ENCODE measurements at regions of chr1 and their contacts with region 1.

Region 1: DNA sequence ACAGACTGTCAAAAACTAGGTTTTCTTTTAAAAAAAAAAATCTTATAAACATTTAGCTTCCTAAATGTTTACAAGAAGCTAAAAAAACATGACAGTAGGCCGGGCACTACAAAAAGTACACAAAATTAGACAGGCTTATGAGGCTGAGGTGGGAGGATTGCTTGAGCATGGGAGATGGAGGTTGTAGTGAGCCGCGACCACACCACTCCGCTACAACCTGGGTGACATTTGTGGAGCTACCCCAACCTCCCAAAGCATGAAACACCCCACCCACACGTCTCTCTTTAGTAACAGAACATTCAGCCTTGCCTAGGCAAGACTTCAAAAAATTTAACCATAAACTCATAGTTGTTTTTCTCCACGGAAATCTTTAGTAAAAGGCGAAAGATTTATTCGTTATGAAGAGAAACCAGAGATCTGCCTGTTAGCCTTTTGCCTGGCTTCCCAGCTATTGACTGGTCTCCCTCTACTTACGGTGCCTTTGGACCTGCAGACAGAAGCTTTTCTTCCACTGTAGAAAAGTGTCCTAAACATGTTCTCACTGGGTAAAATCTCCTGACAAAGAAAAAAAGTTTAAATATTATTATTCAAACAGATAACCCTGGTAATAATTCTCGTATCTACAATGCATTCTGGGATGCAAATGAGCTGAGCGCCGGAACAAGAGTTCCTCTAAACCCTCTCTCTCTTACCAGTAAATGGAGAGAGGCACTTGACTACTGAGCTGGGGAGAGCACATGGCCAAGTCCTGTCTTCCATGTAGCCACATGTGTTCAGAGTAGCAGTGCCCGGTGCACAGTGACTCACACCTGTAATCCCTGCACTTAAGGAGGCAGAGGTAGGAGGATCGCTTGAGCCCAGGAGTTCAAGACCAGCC is 9.2 kb downstream of the RNU5D-1 start:
- DNase-seq: peak; percentile 91 to 98 (median 94)
- ATAC-seq: peak; percentile 97
- H3K4me3 ChIP-seq: no peak overlapping the region
- H3K27ac ChIP-seq: peak overlapping the region; percentile 95
- H3K4me1 ChIP-seq: peaks cover 17 to 24% of the 10 kb centered on the region in 2 experiments
- H3K27me3 ChIP-seq: peaks cover 2 to 12% of the 10 kb centered on the region in 2 experiments; a peak in 4 of 5 replicates
- CTCF ChIP-seq: no peak; a peak in 2 of 6 replicates
- EP300 ChIP-seq: peak; percentile 86
- POLR2A ChIP-seq: peak; percentile 100
- RAD21 ChIP-seq: peak in 1 of 2 experiments; percentile 56; a peak in 2 of 4 replicates

Region 2: GRCh38 chr1:44553771-44554170 is 168.0 kb before region 1 on chr1:
- CTCF ChIA-PET with region 1: no interaction called
- POLR2A ChIA-PET with region 1: no interaction called
- in situ Hi-C with region 1: no loop called
- intact Hi-C with region 1: no loop called
- DNase-seq: no peak
- ATAC-seq: no peak
- H3K4me3 ChIP-seq: no peak overlapping the region
- H3K27ac ChIP-seq: no peak overlapping the region
- H3K4me1 ChIP-seq: no peaks in the 10 kb centered on the region
- H3K27me3 ChIP-seq: peaks cover 63 to 65% of the 10 kb centered on the region in 2 experiments
- CTCF ChIP-seq: no peak
- EP300 ChIP-seq: no peak
- POLR2A ChIP-seq: no peak
- RAD21 ChIP-seq: no peak

Region 3: DNA sequence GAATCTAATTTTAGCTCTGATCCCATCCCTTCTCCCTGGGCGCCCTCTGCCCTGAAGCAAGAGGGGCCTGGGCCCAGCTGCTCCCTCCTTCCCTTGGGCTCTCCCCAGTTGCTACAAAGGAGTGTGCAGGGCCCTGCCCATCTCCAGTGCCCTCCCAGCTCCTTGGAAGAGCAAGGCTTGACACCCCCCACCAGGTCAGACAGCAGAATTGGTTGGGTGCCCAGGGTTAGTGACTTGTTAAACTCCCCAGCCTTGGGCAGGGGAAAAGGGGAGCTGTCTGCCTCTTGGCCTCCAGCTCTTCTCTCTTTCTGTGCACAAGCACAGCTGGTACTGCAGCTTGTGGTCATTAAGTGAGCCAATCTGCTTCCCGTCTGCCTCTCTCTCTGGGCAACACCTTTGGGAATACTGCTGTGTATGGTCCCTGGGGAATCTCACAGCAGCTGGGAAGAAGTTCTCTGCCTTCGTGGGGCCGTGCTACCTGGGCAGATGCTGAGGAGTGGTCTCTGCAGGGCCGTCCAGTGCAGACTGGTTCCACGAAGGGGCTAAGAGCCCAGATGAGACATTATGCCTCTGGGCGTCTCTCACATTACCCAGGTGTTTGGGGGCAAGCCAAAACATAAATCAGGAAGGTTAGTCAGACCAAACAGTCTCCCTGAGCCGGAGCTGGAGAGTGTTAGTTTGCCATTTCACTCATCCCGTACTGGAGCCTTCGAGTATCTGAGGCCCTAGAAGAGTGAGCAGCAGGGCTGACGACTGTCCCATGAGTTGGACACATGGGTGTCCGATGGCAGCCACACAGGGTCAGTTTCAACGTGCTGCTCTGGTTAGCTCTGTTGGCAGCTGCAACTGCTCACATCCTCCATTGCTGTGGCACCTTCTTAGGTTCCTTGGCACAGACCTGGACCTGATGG is 84.8 kb before region 1 on chr1:
- CTCF ChIA-PET with region 1: no interaction called
- POLR2A ChIA-PET with region 1: interaction called, 21 read pairs
- in situ Hi-C with region 1: no loop called
- intact Hi-C with region 1: no loop called
- DNase-seq: no peak
- ATAC-seq: peak; percentile 3
- H3K4me3 ChIP-seq: no peak overlapping the region
- H3K27ac ChIP-seq: peak overlapping the region; percentile 49; the same call in 2 of the 3 replicates
- H3K4me1 ChIP-seq: peaks cover 46 to 49% of the 10 kb centered on the region in 2 experiments; a peak in 4 of 5 replicates
- H3K27me3 ChIP-seq: no peaks in the 10 kb centered on the region
- CTCF ChIP-seq: no peak
- EP300 ChIP-seq: no peak
- POLR2A ChIP-seq: no peak
- RAD21 ChIP-seq: no peak

Region 4: DNA sequence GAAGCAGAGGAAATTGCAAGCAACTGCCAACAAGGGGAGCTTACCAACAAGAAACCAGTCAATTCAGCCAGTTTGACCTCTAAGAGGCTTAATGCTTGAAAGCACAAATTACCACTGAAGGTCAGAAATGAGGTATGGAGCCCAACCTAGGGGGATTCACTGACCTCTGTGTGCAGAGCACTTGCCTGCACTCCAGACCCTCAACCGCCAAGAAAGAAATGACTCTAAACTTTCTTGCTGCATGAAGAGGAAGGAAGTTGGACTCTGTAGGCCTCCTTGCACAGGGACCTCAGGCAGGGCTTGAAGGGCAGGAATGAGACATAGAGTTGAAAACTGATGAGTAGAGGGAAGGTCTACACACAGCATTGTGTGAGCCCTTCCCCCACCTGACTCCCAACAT is 37.2 kb before region 1 on chr1:
- CTCF ChIA-PET with region 1: no interaction called
- POLR2A ChIA-PET with region 1: interaction called, 27 read pairs
- in situ Hi-C with region 1: no loop called
- intact Hi-C with region 1: no loop called
- DNase-seq: no peak
- ATAC-seq: no peak; the same call in 2 of the 3 replicates
- H3K4me3 ChIP-seq: no peak overlapping the region
- H3K27ac ChIP-seq: no peak overlapping the region
- H3K4me1 ChIP-seq: no peaks in the 10 kb centered on the region; a peak in 1 of 5 replicates
- H3K27me3 ChIP-seq: peaks cover 45 to 58% of the 10 kb centered on the region in 2 experiments
- CTCF ChIP-seq: no peak
- EP300 ChIP-seq: no peak
- POLR2A ChIP-seq: no peak
- RAD21 ChIP-seq: no peak

Region 5: DNA sequence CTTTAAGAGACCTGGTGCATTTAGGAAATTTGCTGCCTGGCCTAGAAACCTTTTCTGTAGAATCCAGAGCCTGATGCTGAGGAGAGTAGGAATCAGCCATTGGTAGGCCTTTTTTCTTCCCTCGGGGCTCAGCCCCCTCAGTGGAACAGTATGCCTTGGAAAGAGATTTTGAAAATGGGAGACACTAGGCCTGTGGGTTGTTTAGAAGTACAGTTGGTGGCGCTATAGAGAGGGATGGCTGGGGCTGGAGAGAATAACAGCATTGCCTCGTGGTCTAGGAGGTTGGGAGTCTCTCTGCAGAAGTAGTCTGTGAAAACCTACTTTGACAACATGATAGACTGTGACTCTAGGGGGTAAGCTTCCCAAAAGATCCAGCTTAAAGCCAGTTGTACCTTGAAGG is 26.2 kb after region 1 on chr1:
- CTCF ChIA-PET with region 1: no interaction called
- POLR2A ChIA-PET with region 1: interaction called, 43 read pairs
- in situ Hi-C with region 1: no loop called
- intact Hi-C with region 1: no loop called
- DNase-seq: no peak
- ATAC-seq: peak; percentile 64
- H3K4me3 ChIP-seq: no peak overlapping the region
- H3K27ac ChIP-seq: no peak overlapping the region
- H3K4me1 ChIP-seq: peaks cover 3 to 8% of the 10 kb centered on the region in 2 experiments; a peak in 4 of 5 replicates
- H3K27me3 ChIP-seq: no peaks in the 10 kb centered on the region
- CTCF ChIP-seq: peak; percentile 34 to 48 (median 43); a peak in 4 of 6 replicates
- EP300 ChIP-seq: no peak
- POLR2A ChIP-seq: no peak
- RAD21 ChIP-seq: no peak

Region 6: GRCh38 chr1:44807262-44808062 is 85.7 kb after region 1 on chr1 and contains the start of gene DYNLT4:
- CTCF ChIA-PET with region 1: no interaction called
- POLR2A ChIA-PET with region 1: interaction called, 66 read pairs
- in situ Hi-C with region 1: no loop called
- intact Hi-C with region 1: no loop called
- DNase-seq: peak; percentile 86 to 99 (median 90)
- ATAC-seq: peak; percentile 84
- H3K4me3 ChIP-seq: peak within 1 kb of the TSS; percentile 30; the same call in 1 of the 2 replicates
- H3K27ac ChIP-seq: peak within 1 kb of the TSS; percentile 100
- H3K4me1 ChIP-seq: peaks cover 59 to 72% of the 10 kb centered on the region in 2 experiments
- H3K27me3 ChIP-seq: no peaks in the 10 kb centered on the region
- CTCF ChIP-seq: peak in 1 of 3 experiments; percentile 0; a peak in 1 of 6 replicates
- EP300 ChIP-seq: peak; percentile 71; the same call in 1 of the 2 replicates
- POLR2A ChIP-seq: peak; percentile 88
- RAD21 ChIP-seq: peak; percentile 9 to 20; a peak in 3 of 4 replicates
- polyA plus RNA-seq, gene DYNLT4: not detected

Region 7: GRCh38 chr1:45339789-45340570 is 618.3 kb after region 1 on chr1 and contains the starts of genes MUTYH and TOE1:
- CTCF ChIA-PET with region 1: no interaction called
- POLR2A ChIA-PET with region 1: interaction called, 11 read pairs
- in situ Hi-C with region 1: no loop called
- intact Hi-C with region 1: no loop called
- DNase-seq: peak; percentile 98 to 99 (median 98)
- ATAC-seq: peak; percentile 95
- H3K4me3 ChIP-seq: peak within 1 kb of the TSS; percentile 66
- H3K27ac ChIP-seq: peak within 1 kb of the TSS; percentile 94
- H3K4me1 ChIP-seq: peaks cover 6 to 18% of the 10 kb centered on the region in 2 experiments; a peak in 4 of 5 replicates
- H3K27me3 ChIP-seq: no peaks in the 10 kb centered on the region
- CTCF ChIP-seq: no peak
- EP300 ChIP-seq: no peak; the same call in 1 of the 2 replicates
- POLR2A ChIP-seq: peak; percentile 99
- RAD21 ChIP-seq: no peak; a peak in 1 of 4 replicates
- polyA plus RNA-seq, gene MUTYH: 3.4 to 6.2 TPM
- polyA plus RNA-seq, gene TOE1: 59.8 to 85.7 TPM

Measured in K562 (cell line).